ENCODE measurements at regions of chr17 and their contacts with region 1.

Region 1: DNA sequence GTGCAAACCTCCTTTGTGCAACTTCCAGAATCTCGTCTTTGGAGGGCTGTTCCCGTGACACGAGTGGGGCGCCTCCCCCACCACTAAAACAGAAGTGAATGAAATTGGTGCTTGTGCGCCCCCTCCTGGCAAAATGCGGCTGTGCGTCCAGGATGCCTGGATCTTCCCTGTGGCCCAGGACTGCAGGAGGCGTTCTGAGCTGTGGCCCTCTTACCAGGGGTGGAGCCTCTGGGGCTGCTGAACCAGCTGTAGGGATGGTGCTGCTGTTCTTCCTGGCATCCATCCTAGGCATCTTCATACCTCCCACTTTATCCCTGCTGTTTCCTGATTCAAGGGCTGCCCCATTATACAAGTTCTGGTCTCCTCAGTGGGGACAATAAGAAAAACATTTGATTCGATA is 18.5 kb upstream of the NAGLU start:
- DNase-seq: peak; percentile 95
- ATAC-seq: peak; percentile 58

Region 2: GRCh38 chr17:42405963-42406495 is 111.5 kb before region 1 on chr17:
- intact Hi-C with region 1: loop called (anchors 10 kb)
- DNase-seq: peak; percentile 93
- ATAC-seq: peak; percentile 77

Region 3: GRCh38 chr17:42566883-42567573 is 49.5 kb after region 1 on chr17 and contains the start of gene MLX:
- intact Hi-C with region 1: no loop called
- DNase-seq: peak; percentile 97
- ATAC-seq: peak; percentile 89
- total RNA-seq, gene MLX: 26.6 TPM

Measured in sciatic nerve (tissue), 2 donors.